K562 (cell line): ENCODE measurements at regions of chr3 and their contacts with region 1.

Region 1: DNA sequence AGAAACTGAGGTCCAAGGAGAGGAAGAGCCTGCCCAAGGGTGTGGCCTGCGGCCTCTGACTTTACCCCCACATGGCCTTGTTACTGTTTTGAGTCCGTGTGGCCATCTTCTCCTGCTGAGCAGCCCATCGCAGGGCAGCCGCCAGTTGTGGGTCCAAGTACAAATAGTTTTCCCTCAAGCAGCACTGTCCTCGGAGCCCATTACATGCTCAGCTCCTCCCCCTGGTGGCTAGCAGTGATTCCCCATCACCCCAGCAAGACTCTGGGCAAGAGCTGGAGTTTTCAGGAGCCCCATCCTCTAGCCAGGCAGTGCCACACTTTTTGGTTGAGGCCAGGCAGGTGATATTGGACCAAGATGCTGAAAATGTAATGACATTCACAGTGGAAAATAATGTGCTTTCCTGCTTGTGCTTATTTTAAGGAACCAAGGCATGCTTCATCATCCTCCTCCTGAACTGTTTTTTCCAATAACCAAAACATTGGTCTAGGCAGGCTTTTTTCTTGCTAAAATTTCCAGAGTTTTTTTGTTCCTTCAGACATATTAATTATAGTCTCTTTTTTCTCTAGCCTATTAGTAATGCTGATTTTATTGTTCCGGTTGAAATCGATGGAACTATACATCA is 23.2 kb upstream of the VILL start:
- DNase-seq: peak; percentile 78 to 81 (median 80)
- ATAC-seq: peak; percentile 98
- H3K4me3 ChIP-seq: no peak overlapping the region
- H3K27ac ChIP-seq: no peak overlapping the region
- H3K4me1 ChIP-seq: peaks cover 0 to 7% of the 10 kb centered on the region in 2 experiments; a peak in 2 of 5 replicates
- H3K27me3 ChIP-seq: 0 out of 5 replicates have a peak, but pooled peaks cover 0 to 4% of the 10 kb centered on the region in 2 experiments
- CTCF ChIP-seq: peak; percentile 90 to 93 (median 91)
- EP300 ChIP-seq: no peak
- POLR2A ChIP-seq: no peak
- RAD21 ChIP-seq: peak; percentile 93 to 96

Region 2: GRCh38 chr3:36729204-36730056 is 1237.9 kb before region 1 on chr3:
- CTCF ChIA-PET with region 1: no interaction called
- POLR2A ChIA-PET with region 1: no interaction called
- in situ Hi-C with region 1: no loop called
- intact Hi-C with region 1: loop called (anchors 5 kb)
- DNase-seq: peak; percentile 43 to 58 (median 52)
- ATAC-seq: peak; percentile 86
- H3K4me3 ChIP-seq: no peak overlapping the region
- H3K27ac ChIP-seq: no peak overlapping the region
- H3K4me1 ChIP-seq: peaks cover 0 to 6% of the 10 kb centered on the region in 2 experiments; a peak in 2 of 5 replicates
- H3K27me3 ChIP-seq: peaks cover 0 to 16% of the 10 kb centered on the region in 2 experiments; a peak in 4 of 5 replicates
- CTCF ChIP-seq: peak; percentile 51 to 94 (median 79); a peak in 5 of 6 replicates
- EP300 ChIP-seq: no peak
- POLR2A ChIP-seq: no peak
- RAD21 ChIP-seq: peak; percentile 97

Region 3: GRCh38 chr3:37559461-37559860 is 407.9 kb before region 1 on chr3:
- CTCF ChIA-PET with region 1: interaction called, 6 read pairs
- POLR2A ChIA-PET with region 1: no interaction called
- in situ Hi-C with region 1: no loop called
- intact Hi-C with region 1: loop called (anchors 10 kb)
- DNase-seq: no peak
- ATAC-seq: no peak
- H3K4me3 ChIP-seq: no peak overlapping the region
- H3K27ac ChIP-seq: no peak overlapping the region
- H3K4me1 ChIP-seq: no peaks in the 10 kb centered on the region
- H3K27me3 ChIP-seq: peaks cover 0 to 22% of the 10 kb centered on the region in 2 experiments; a peak in 3 of 5 replicates
- CTCF ChIP-seq: no peak
- EP300 ChIP-seq: no peak
- POLR2A ChIP-seq: no peak
- RAD21 ChIP-seq: no peak

Region 4: DNA sequence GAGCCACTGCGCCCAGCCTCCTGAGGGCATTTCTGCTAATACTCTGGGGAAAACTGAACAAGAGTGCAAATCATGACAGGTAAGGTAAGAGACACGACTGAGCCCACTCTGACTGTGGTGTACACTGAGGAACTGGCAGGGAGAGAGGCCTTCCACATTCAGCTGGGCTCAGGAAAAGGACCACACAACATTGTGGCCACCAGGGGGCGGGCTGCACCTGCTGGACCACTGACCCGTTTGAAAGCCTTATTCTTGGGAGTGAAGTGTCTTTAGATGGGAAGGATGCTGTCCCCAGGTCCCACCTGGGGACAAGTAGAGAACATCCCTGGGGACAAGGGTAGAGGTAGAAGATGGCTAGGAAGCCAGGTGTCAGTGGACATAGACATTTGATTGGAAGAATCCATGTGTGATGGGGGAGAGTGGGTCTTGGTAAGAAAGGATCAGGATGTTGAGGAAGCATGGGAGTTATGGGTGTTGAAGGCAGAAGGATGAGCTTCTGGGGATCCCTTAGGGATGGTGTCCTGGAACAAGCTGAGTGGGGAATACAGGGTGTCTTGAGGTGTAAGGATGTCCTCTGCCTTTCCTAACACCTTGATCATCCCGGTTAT is 111.9 kb before region 1 on chr3:
- CTCF ChIA-PET with region 1: interaction called, 8 read pairs
- POLR2A ChIA-PET with region 1: interaction called, 15 read pairs
- in situ Hi-C with region 1: loop called (anchors 5 kb)
- intact Hi-C with region 1: loop called (anchors 1 kb)
- DNase-seq: peak; percentile 80 to 86 (median 83)
- ATAC-seq: peak; percentile 83
- H3K4me3 ChIP-seq: no peak overlapping the region
- H3K27ac ChIP-seq: no peak overlapping the region
- H3K4me1 ChIP-seq: peaks cover 8 to 15% of the 10 kb centered on the region in 2 experiments
- H3K27me3 ChIP-seq: no peaks in the 10 kb centered on the region; a peak in 1 of 5 replicates
- CTCF ChIP-seq: peak; percentile 95 to 98 (median 97)
- EP300 ChIP-seq: no peak
- POLR2A ChIP-seq: no peak
- RAD21 ChIP-seq: peak; percentile 97 to 99

Region 5: DNA sequence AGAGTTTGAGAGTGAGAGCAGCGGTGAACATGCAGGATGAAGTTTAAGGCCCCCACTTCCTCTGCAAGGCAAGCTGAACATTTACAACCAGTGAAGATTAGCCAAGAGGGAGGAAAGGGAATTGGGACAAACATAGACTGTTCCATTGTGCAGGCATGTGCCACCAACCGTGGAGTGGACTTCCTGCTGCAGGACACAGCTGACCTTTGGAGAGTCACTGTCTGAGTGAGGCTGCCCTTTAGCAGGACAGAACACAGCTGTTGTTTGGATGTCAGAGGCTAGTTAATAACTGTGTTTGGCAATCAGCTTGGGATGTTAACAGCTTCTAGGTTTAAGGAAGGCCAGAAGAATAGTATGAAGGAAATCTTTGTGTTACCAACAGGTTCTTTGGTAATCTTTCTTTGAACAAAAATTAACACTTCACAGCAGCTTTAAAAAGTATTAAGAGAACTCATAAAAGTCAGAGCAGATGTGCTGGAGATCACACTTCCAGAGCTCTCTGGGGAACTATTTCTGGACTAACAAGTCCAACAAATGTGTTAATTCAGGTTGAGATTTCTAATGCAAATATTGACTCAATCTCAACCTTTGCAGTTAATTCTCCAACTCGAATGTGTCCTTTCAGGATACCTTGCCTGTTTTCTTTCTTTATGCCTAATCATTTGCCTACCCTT is 74.3 kb before region 1 on chr3:
- CTCF ChIA-PET with region 1: no interaction called
- POLR2A ChIA-PET with region 1: no interaction called
- in situ Hi-C with region 1: no loop called
- intact Hi-C with region 1: no loop called
- DNase-seq: no peak
- ATAC-seq: peak; percentile 66
- H3K4me3 ChIP-seq: no peak overlapping the region
- H3K27ac ChIP-seq: no peak overlapping the region
- H3K4me1 ChIP-seq: peaks cover 0 to 14% of the 10 kb centered on the region in 2 experiments; a peak in 3 of 5 replicates
- H3K27me3 ChIP-seq: peaks cover 0 to 2% of the 10 kb centered on the region in 2 experiments; a peak in 3 of 5 replicates
- CTCF ChIP-seq: no peak
- EP300 ChIP-seq: no peak
- POLR2A ChIP-seq: no peak
- RAD21 ChIP-seq: no peak